ENCODE measurements at regions of chr9 and their contacts with region 1.

Region 1: DNA sequence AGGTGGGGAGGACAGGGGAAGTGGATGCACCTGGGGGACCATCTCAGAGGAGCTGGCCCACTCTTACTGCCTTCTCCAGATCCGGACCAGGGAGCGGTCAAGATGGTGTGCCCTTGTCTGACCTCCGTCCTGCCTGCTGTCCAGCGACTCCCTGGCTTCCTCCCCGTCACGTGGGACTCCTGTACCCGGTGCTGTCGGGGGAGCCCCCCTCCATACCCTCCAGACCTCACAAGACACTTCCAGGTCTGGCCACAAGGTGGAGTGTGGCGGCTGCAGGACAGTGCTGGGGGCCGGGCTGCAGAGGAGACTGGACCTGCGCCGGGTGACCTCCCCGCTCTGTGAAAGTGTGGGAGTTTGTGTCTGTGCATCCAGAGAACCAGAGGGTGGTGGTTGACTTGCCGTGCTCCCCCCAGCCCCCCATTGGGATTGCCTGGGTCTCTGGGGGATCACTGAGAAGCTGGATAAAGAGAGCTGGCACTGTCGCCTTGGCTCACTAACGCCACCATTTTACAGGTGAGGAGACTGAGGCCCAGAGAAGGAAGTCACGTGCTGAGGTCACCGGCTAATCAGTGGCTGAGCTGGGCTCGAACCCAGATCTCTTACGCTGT is 1.9 kb upstream of the CRB2 start:
- DNase-seq: peak; percentile 74 to 76
- H3K4me3 ChIP-seq: no peak overlapping the region
- H3K27ac ChIP-seq: no peak overlapping the region
- H3K4me1 ChIP-seq: peaks cover 0 to 3% of the 10 kb centered on the region in 2 donors
- H3K27me3 ChIP-seq: no peaks in the 10 kb centered on the region
- CTCF ChIP-seq: peak; percentile 83 to 92 (median 86)
- POLR2A ChIP-seq: no peak

Region 2: DNA sequence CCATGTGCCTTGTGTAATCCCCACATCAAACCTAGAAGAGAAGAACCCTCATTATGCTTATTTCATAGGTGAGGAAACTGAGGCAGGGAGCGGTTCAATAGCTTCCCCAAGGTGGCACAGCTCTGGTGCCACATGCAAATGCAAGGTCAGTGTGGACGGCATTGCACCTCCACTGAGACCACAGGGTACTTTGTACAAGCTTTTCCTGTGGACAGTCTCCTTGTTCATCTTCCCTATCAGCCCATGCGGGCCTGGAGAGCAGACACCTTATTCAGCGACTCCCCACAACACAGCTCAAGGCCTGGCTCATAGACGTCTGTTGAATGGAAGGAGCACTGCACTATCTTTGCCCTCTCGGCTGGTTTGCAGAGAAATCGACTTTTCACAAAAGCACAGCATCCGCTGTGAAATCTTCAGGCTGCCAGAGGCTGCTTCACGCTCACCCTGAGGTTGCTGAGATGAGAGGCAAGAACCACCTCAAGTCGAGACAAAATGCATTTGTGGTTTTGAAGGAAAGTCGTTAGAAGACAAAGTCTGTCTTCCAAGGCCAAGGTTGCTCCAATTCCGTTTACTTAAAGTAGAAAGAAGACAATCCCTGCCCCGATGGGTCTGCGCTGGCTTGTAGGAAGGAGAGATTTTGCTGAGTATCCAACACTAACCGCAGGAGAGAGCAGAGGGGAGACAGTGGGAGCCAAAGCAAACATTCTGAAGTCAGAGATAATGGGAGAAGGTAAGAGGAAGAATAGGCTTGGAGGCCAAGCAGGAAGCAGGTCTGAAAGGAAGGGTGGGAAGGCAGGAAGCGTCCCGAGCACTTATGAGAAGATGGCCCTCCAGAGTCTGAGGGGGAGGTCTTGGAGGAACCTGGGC is 51.5 kb before region 1 on chr9:
- intact Hi-C with region 1: no loop called
- DNase-seq: no peak
- H3K4me3 ChIP-seq: no peak overlapping the region
- H3K27ac ChIP-seq: no peak overlapping the region
- H3K4me1 ChIP-seq: no peaks in the 10 kb centered on the region
- H3K27me3 ChIP-seq: no peaks in the 10 kb centered on the region
- CTCF ChIP-seq: no peak
- POLR2A ChIP-seq: no peak

Region 3: GRCh38 chr9:123383512-123384170 is 29.6 kb after region 1 on chr9:
- intact Hi-C with region 1: loop called (anchors 2 kb)
- DNase-seq: no peak
- H3K4me3 ChIP-seq: no peak overlapping the region
- H3K27ac ChIP-seq: no peak overlapping the region
- H3K4me1 ChIP-seq: no peaks in the 10 kb centered on the region
- H3K27me3 ChIP-seq: no peaks in the 10 kb centered on the region
- CTCF ChIP-seq: no peak
- POLR2A ChIP-seq: no peak

Measured in uterus (tissue), 4 donors.